K562 (cell line): ENCODE measurements at regions of chr7 and their contacts with region 1.

Region 1: GRCh38 chr7:73647725-73648592 is 19.7 kb upstream of the VPS37D start:
- DNase-seq: peak in 2 of 4 experiments; percentile 80 to 83
- ATAC-seq: peak; percentile 78
- H3K4me3 ChIP-seq: peak overlapping the region; percentile 31
- H3K27ac ChIP-seq: no peak overlapping the region
- H3K4me1 ChIP-seq: peaks cover 0 to 14% of the 10 kb centered on the region in 2 experiments; a peak in 2 of 5 replicates
- H3K27me3 ChIP-seq: peaks cover 34 to 77% of the 10 kb centered on the region in 2 experiments
- CTCF ChIP-seq: peak in 2 of 3 experiments; percentile 32 to 48; a peak in 3 of 6 replicates
- EP300 ChIP-seq: no peak
- POLR2A ChIP-seq: no peak
- RAD21 ChIP-seq: peak in 1 of 2 experiments; percentile 30; a peak in 2 of 4 replicates

Region 2: DNA sequence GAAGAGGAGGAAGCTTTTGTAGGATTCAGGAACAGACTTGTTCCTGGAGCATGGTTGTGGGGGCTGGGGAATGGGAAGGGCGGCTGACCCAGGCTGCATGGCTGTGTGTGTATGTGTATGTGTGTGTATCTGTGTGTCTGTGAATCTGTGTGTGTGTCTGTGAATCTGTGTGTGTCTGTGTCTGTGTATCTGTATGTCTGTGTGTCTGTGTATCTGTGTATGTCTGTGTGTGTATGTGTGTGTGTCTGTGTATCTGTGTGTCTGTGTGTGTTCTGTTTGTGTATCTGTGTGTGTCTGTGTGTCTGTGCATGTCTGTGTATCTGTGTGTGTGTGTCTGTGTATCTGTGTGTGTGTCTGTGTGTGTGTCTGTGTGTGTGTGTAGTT is 78.1 kb after region 1 on chr7:
- CTCF ChIA-PET with region 1: interaction called, 13 read pairs
- POLR2A ChIA-PET with region 1: no interaction called
- in situ Hi-C with region 1: no loop called
- intact Hi-C with region 1: no loop called
- DNase-seq: no peak
- ATAC-seq: peak; percentile 60
- H3K4me3 ChIP-seq: no peak overlapping the region
- H3K27ac ChIP-seq: no peak overlapping the region
- H3K4me1 ChIP-seq: peaks cover 10 to 13% of the 10 kb centered on the region in 2 experiments; a peak in 4 of 5 replicates
- H3K27me3 ChIP-seq: no peaks in the 10 kb centered on the region
- CTCF ChIP-seq: no peak; a peak in 1 of 6 replicates
- EP300 ChIP-seq: no peak
- POLR2A ChIP-seq: no peak
- RAD21 ChIP-seq: no peak

Region 3: GRCh38 chr7:73822319-73823076 is 174.5 kb after region 1 on chr7:
- CTCF ChIA-PET with region 1: no interaction called
- POLR2A ChIA-PET with region 1: no interaction called
- in situ Hi-C with region 1: no loop called
- intact Hi-C with region 1: no loop called
- DNase-seq: peak; percentile 96 to 99 (median 98)
- ATAC-seq: peak; percentile 99
- H3K4me3 ChIP-seq: no peak overlapping the region
- H3K27ac ChIP-seq: peak overlapping the region; percentile 73
- H3K4me1 ChIP-seq: peaks cover 25 to 27% of the 10 kb centered on the region in 2 experiments
- H3K27me3 ChIP-seq: no peaks in the 10 kb centered on the region
- CTCF ChIP-seq: no peak
- EP300 ChIP-seq: peak; percentile 66
- POLR2A ChIP-seq: peak; percentile 40; the same call in 1 of the 2 replicates
- RAD21 ChIP-seq: no peak

Region 4: GRCh38 chr7:74173866-74174605 is 526.1 kb after region 1 on chr7 and contains the start of gene EIF4H:
- CTCF ChIA-PET with region 1: no interaction called
- POLR2A ChIA-PET with region 1: no interaction called
- in situ Hi-C with region 1: no loop called
- intact Hi-C with region 1: no loop called
- DNase-seq: peak; percentile 96 to 99 (median 97)
- ATAC-seq: peak; percentile 93
- H3K4me3 ChIP-seq: peak within 1 kb of the TSS; percentile 79
- H3K27ac ChIP-seq: peak within 1 kb of the TSS; percentile 91
- H3K4me1 ChIP-seq: peaks cover 24 to 35% of the 10 kb centered on the region in 2 experiments; a peak in 4 of 5 replicates
- H3K27me3 ChIP-seq: no peaks in the 10 kb centered on the region
- CTCF ChIP-seq: no peak
- EP300 ChIP-seq: 0 out of 2 replicates have a peak, but pooled peaks have one; percentile 14
- POLR2A ChIP-seq: peak; percentile 76
- RAD21 ChIP-seq: no peak
- polyA plus RNA-seq, gene EIF4H: 11.0 to 15.9 TPM